ENCODE measurements at regions of chr6 and their contacts with region 1.

Region 1: DNA sequence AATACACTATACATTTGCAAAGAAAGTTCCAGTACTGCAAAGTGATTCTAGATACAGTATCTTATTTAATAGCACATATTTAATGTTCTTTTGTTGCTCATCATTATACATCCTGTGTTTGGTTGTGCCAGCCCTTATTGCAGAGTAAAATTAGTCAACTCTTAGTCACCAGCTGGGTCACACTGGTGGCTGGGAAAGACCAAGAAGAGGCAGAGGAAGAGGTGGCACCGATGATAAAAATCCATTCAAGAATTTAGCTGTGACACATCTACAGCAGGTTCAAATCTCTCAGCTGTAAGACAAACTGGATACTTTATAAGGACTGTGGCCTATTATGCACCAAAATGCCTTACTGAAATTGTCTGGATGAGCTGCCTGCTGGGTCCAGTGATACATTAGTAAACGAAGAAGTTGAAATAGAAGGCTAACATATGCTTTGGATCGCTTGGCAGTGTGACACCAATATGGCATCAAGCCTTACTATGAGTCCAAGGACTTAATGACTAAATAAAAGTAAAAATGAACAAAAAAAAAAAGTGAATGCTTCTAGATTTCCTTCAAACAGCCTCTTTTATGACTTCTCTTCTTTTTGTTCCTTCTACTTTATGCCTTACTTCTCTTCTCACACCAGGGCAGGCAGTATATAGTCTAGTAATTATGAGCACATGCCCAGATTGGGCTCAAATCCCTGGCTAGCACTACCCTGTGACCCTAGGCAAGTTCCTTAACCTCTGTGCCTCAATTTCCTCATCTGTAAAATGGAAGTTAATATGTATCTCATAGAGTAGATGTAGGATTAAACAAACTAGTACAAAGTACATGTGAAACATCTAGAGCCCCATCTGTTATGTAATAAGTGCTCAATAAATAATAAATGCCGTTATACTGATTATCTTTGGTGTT is 29.4 kb upstream of the RNF8 start:
- DNase-seq: no peak
- H3K4me3 ChIP-seq: no peak overlapping the region
- H3K4me3 Mint-ChIP-seq: no peak overlapping the region
- H3K27ac ChIP-seq: no peak overlapping the region
- H3K27ac Mint-ChIP-seq: peak overlapping the region in 4 of 7 donors; percentile 10 to 70 (median 44)
- H3K4me1 ChIP-seq: no peaks in the 10 kb centered on the region
- H3K4me1 Mint-ChIP-seq: peaks cover 3 to 4% (median 4%) of the 10 kb centered on the region in 4 donors
- H3K27me3 ChIP-seq: no peaks in the 10 kb centered on the region
- H3K27me3 Mint-ChIP-seq: no peaks in the 10 kb centered on the region

Region 2: GRCh38 chr6:37289931-37290330 is 34.5 kb before region 1 on chr6:
- CTCF ChIA-PET with region 1: interaction called, 12 read pairs
- POLR2A ChIA-PET with region 1: no interaction called
- intact Hi-C with region 1: no loop called
- DNase-seq: peak; percentile 60 to 76 (median 67)
- H3K4me3 ChIP-seq: no peak overlapping the region
- H3K4me3 Mint-ChIP-seq: peak overlapping the region in 7 of 8 donors; percentile 23 to 65 (median 51)
- H3K27ac ChIP-seq: no peak overlapping the region
- H3K27ac Mint-ChIP-seq: peak overlapping the region; percentile 74 to 96 (median 83)
- H3K4me1 ChIP-seq: peaks cover 18% of the 10 kb centered on the region
- H3K4me1 Mint-ChIP-seq: peaks cover 18 to 42% (median 24%) of the 10 kb centered on the region in 4 donors
- H3K27me3 ChIP-seq: no peaks in the 10 kb centered on the region
- H3K27me3 Mint-ChIP-seq: no peaks in the 10 kb centered on the region

Region 3: DNA sequence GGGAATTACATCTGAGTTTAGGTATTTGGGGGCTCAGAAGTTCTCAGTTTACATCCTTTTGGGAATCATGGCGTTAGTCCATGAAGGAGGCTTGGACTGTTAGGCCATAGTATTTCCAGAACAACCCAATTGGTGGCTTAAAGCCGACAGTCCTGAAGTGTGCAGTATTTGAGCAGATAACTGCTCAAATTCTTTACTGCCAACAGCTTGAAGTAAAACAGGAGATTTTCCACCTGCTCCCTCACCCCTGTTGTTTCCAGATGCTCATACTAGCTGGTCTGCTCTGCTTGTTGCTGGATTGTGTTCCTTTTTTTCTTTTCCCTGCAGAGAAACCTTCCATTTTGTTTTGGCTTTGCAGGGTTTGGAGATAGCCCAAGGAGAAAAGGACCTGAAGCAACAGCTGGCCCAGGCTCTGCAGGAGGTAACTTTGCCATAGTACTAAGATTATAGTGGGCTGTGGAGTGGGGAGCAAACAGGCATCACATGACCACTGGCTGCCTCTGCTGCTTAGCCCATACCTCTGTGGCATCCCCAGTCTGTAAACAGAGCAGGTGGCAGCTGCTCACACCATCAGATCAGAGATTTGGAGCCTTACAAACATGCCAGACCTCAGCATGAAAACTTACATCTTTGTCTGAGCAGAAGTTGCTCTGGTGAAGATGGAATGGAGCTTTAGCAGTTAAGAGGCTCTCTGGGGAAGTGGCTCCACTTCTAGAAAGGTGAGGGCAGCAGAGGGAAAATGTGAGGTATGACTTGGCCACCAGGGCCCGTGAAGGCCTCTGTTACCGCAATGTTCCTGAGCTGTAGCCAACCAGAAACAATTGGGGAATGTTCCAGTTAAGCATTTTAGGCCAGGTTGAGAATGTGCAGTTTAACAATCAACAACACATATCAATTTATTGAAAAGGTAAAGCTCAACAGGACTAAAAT is 47.0 kb after region 1 on chr6:
- CTCF ChIA-PET with region 1: interaction called, 10 read pairs
- POLR2A ChIA-PET with region 1: no interaction called
- intact Hi-C with region 1: no loop called
- DNase-seq: no peak
- H3K4me3 ChIP-seq: no peak overlapping the region
- H3K4me3 Mint-ChIP-seq: no peak overlapping the region
- H3K27ac ChIP-seq: no peak overlapping the region
- H3K27ac Mint-ChIP-seq: peak overlapping the region in 2 of 7 donors; percentile 13 to 23
- H3K4me1 ChIP-seq: no peaks in the 10 kb centered on the region
- H3K4me1 Mint-ChIP-seq: peaks cover 0 to 7% (median 4%) of the 10 kb centered on the region in 4 donors
- H3K27me3 ChIP-seq: no peaks in the 10 kb centered on the region
- H3K27me3 Mint-ChIP-seq: no peaks in the 10 kb centered on the region

Region 4: GRCh38 chr6:37483917-37484785 is 159.8 kb after region 1 on chr6:
- CTCF ChIA-PET with region 1: no interaction called
- POLR2A ChIA-PET with region 1: interaction called, 3 read pairs
- intact Hi-C with region 1: loop called (anchors 2 kb)
- DNase-seq: peak; percentile 74 to 81 (median 76)
- H3K4me3 ChIP-seq: no peak overlapping the region
- H3K4me3 Mint-ChIP-seq: no peak overlapping the region
- H3K27ac ChIP-seq: peak overlapping the region; percentile 30
- H3K27ac Mint-ChIP-seq: peak overlapping the region; percentile 15 to 97 (median 68)
- H3K4me1 ChIP-seq: peaks cover 34% of the 10 kb centered on the region
- H3K4me1 Mint-ChIP-seq: peaks cover 15 to 32% (median 24%) of the 10 kb centered on the region in 4 donors
- H3K27me3 ChIP-seq: no peaks in the 10 kb centered on the region
- H3K27me3 Mint-ChIP-seq: no peaks in the 10 kb centered on the region

Region 5: GRCh38 chr6:37691904-37692806 is 367.8 kb after region 1 on chr6:
- CTCF ChIA-PET with region 1: interaction called, 29 read pairs
- POLR2A ChIA-PET with region 1: interaction called, 4 read pairs
- intact Hi-C with region 1: loop called (anchors 1 kb)
- DNase-seq: peak; percentile 69 to 80 (median 73)
- H3K4me3 ChIP-seq: no peak overlapping the region
- H3K4me3 Mint-ChIP-seq: peak overlapping the region in 1 of 8 donors; percentile 30
- H3K27ac ChIP-seq: no peak overlapping the region
- H3K27ac Mint-ChIP-seq: peak overlapping the region in 1 of 7 donors; percentile 21
- H3K4me1 ChIP-seq: peaks cover 17% of the 10 kb centered on the region
- H3K4me1 Mint-ChIP-seq: peaks cover 12 to 53% (median 19%) of the 10 kb centered on the region in 4 donors
- H3K27me3 ChIP-seq: peaks cover 14% of the 10 kb centered on the region
- H3K27me3 Mint-ChIP-seq: no peaks in the 10 kb centered on the region

Region 6: DNA sequence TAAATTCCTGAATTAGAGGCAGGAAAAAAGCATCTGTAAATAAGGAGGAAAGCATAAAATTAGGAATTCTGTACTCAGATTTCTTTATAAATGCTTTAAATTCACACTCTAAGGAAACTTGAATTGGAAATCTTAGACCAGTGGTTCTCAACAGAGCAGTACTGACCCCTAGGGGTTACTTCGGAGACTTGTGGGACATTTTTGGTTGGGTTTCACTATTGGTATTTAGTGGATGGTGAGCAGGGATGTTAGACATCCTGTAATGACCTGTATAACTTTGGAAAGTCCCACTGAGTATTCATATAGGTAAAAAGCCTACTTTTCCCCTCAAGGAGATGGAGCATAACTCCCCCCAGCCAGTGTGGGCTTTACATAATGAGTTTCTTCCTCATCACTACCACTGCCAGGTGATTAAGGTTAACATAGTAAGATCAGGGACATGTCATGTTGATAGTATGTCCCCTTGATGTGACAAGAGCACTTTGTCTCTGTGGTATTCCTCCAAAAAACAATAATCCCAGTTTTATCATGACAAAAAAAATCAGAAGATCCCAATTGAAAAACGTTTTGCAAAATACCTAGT is 1347.6 kb after region 1 on chr6:
- CTCF ChIA-PET with region 1: no interaction called
- POLR2A ChIA-PET with region 1: no interaction called
- intact Hi-C with region 1: loop called (anchors 5 kb)
- DNase-seq: peak; percentile 33 to 46 (median 42)
- H3K4me3 ChIP-seq: no peak overlapping the region
- H3K4me3 Mint-ChIP-seq: no peak overlapping the region
- H3K27ac ChIP-seq: no peak overlapping the region
- H3K27ac Mint-ChIP-seq: peak overlapping the region in 2 of 7 donors; percentile 22 to 51
- H3K4me1 ChIP-seq: peaks cover 9% of the 10 kb centered on the region
- H3K4me1 Mint-ChIP-seq: peaks cover 9 to 21% (median 17%) of the 10 kb centered on the region in 4 donors
- H3K27me3 ChIP-seq: no peaks in the 10 kb centered on the region
- H3K27me3 Mint-ChIP-seq: no peaks in the 10 kb centered on the region

Measured in CD4-positive, alpha-beta memory T cell (primary cell).